Prostate gland (tissue), 2 donors: ENCODE measurements at regions of chr12 and their contacts with region 1.

Region 1: GRCh38 chr12:54005853-54006686 is 2.7 kb upstream of the HOXC8 start:
- DNase-seq: peak; percentile 78
- H3K4me3 ChIP-seq: no peak overlapping the region
- H3K27ac ChIP-seq: no peak overlapping the region
- H3K4me1 ChIP-seq: no peaks in the 10 kb centered on the region
- H3K27me3 ChIP-seq: peaks cover 83% of the 10 kb centered on the region
- CTCF ChIP-seq: peak; percentile 89 to 99 (median 94)
- POLR2A ChIP-seq: no peak

Region 2: DNA sequence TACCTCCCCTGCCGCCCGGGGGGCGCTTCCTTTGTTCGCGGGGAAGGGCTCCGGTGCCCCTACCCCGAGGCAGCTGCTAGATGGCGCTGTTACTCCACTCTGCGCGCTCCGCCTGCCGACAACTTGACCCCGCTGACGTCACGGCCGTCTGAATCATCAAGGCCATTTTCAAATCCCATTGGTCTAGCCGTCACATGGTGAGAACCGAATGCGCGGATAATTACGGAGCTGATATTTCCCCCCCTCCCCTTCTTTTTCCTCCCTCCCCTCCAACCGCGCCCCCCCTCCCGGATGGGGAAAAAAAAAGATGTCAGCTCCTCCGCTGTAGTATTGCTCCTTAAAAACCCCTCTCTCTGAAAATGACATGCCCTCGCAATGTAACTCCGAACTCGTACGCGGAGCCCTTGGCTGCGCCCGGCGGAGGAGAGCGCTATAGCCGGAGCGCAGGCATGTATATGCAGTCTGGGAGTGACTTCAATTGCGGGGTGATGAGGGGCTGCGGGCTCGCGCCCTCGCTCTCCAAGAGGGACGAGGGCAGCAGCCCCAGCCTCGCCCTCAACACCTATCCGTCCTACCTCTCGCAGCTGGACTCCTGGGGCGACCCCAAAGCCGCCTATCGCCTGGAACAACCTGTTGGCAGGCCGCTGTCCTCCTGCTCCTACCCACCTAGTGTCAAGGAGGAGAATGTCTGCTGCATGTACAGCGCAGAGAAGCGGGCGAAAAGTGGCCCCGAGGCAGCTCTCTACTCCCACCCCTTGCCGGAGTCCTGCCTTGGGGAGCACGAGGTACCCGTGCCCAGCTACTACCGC is 21.0 kb before region 1 on chr12 and contains the start of gene HOXC10:
- intact Hi-C with region 1: no loop called
- DNase-seq: no peak
- H3K4me3 ChIP-seq: no peak within 1 kb of the TSS
- H3K27ac ChIP-seq: no peak within 1 kb of the TSS
- H3K4me1 ChIP-seq: no peaks in the 10 kb centered on the region
- H3K27me3 ChIP-seq: peaks cover 75% of the 10 kb centered on the region
- CTCF ChIP-seq: no peak
- POLR2A ChIP-seq: no peak
- total RNA-seq, gene HOXC10: 0.51 to 7.2 TPM

Region 3: DNA sequence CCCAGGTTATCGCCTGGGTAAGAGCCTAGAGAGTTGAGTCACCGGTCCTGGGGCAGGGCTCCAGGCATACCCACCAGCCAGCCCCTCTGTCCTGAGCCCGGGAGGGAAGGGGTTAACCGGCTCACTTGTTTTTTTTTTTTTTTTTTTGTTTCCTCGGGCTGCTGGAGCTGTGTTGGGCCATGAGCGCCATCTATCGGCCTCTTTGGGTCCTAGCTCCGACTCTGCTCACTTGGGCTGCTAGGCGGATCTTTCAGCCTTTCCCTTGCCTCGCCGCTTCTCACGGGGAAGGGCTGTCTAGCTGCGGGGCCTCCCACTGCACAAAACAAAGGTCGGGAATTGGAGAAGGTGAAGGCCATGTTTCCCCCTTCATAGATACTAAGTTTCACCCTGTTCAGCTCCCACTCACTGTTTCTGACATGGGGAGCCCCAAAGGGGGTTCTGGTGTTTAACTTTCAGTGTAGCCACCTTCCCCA is 185.5 kb after region 1 on chr12:
- intact Hi-C with region 1: loop called (anchors 2 kb)
- DNase-seq: peak; percentile 82
- H3K4me3 ChIP-seq: no peak overlapping the region
- H3K27ac ChIP-seq: no peak overlapping the region
- H3K4me1 ChIP-seq: peaks cover 4% of the 10 kb centered on the region
- H3K27me3 ChIP-seq: peaks cover 6% of the 10 kb centered on the region
- CTCF ChIP-seq: peak; percentile 70 to 80 (median 76)
- POLR2A ChIP-seq: no peak